Thyroid gland (tissue), 4 donors: ENCODE measurements at regions of chr21 and their contacts with region 1.

Region 1: GRCh38 chr21:37563641-37564340 is 197.2 kb downstream of the DYRK1A start:
- DNase-seq: peak; percentile 94 to 96
- H3K4me3 ChIP-seq: peak overlapping the region; percentile 29 to 72 (median 51)
- H3K27ac ChIP-seq: peak overlapping the region; percentile 54 to 87 (median 80)
- H3K4me1 ChIP-seq: peaks cover 13 to 19% of the 10 kb centered on the region in 2 donors
- H3K27me3 ChIP-seq: no peaks in the 10 kb centered on the region
- CTCF ChIP-seq: peak in 3 of 6 experiments; percentile 28 to 49 (median 42)
- POLR2A ChIP-seq: peak in 1 of 2 donors; percentile 80

Region 2: DNA sequence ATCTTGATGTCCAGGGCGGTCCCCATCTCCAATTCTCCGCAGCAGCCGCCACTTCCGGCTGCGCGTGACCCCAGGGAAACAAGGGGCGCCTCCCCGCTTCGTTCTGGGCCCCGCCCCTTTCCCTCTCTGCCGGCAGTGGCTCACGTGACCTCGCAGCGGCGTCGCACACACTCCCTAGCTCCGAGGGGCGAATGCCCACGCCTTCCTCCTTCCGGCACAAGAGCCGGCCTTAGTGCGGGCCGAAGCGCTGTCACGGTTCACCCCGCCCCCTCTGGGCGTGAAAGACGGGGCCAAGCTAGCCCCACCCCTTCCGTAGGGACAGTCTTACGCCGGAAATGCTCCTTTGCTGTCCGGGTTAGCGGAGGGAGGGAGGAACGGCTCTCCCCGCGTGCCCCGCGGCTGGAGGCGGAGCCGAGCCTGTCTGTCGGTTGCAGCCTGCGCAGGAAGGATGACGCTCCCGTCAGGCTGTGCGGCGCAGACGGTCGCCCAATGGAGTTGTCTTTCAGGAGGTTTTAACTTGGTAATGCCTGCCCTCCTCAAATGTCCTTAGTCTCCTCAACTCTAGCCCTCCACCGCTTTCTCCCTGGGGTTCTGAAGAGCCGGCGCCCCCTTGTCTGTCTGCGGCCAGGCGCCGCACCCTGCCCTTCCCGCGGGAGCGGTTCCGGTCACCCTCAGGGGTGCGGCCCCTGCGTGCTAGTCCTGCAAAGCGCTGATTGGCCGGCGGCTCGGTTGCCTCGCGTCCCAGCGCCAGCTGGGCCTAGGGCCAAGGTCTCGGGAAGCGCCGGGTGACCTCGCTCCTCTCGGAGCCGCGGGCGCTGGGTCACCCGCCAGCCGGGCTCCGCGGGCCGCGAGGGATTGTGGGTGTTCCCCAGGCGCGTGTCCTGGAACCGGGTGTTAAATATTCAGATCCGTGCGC is 296.3 kb before region 1 on chr21 and contains the start of gene VPS26C:
- intact Hi-C with region 1: loop called (anchors 10 kb)
- DNase-seq: peak; percentile 99
- H3K4me3 ChIP-seq: peak within 1 kb of the TSS; percentile 50 to 99 (median 88)
- H3K27ac ChIP-seq: peak within 1 kb of the TSS; percentile 91 to 98 (median 97)
- H3K4me1 ChIP-seq: peaks cover 13 to 16% of the 10 kb centered on the region in 2 donors
- H3K27me3 ChIP-seq: no peaks in the 10 kb centered on the region
- CTCF ChIP-seq: no peak
- POLR2A ChIP-seq: peak; percentile 67 to 82
- total RNA-seq, gene VPS26C: 44.8 to 76.2 (median 62.0) TPM

Region 3: DNA sequence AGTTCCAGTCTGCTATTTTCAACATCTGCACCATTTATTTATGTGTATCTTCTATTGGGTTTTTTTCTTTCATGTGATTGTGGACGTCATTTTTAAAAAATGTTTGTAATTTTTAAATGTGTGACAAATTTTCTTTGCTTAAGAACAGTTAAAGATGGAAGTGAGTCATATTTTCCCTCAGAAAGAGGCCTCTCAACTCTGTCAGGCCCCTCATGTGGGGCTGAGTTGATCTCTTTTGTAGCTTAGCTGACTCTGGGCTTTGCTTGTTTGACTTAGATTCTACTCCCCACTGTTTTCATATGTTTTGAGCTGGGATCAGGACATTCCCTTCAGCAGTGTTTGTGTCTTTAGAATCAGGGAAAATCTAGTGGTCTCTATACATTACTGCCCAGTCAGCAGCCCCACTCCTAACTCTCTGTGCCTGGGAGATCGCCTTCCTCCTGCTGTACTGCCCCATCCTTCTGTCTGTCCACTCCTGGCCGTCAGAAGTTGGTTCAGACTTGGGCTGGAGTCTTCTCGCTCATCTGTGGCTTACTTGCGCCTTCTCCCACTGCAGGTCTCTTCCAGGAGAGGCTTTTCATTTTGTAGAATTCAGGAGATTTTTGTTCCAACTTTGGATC is 59.8 kb before region 1 on chr21:
- intact Hi-C with region 1: no loop called
- DNase-seq: no peak
- H3K4me3 ChIP-seq: no peak overlapping the region
- H3K27ac ChIP-seq: no peak overlapping the region
- H3K4me1 ChIP-seq: peaks cover 7 to 15% of the 10 kb centered on the region in 2 donors
- H3K27me3 ChIP-seq: no peaks in the 10 kb centered on the region
- CTCF ChIP-seq: no peak
- POLR2A ChIP-seq: no peak